B cell (primary cell): ENCODE measurements at regions of chr1 and their contacts with region 1.

Region 1: DNA sequence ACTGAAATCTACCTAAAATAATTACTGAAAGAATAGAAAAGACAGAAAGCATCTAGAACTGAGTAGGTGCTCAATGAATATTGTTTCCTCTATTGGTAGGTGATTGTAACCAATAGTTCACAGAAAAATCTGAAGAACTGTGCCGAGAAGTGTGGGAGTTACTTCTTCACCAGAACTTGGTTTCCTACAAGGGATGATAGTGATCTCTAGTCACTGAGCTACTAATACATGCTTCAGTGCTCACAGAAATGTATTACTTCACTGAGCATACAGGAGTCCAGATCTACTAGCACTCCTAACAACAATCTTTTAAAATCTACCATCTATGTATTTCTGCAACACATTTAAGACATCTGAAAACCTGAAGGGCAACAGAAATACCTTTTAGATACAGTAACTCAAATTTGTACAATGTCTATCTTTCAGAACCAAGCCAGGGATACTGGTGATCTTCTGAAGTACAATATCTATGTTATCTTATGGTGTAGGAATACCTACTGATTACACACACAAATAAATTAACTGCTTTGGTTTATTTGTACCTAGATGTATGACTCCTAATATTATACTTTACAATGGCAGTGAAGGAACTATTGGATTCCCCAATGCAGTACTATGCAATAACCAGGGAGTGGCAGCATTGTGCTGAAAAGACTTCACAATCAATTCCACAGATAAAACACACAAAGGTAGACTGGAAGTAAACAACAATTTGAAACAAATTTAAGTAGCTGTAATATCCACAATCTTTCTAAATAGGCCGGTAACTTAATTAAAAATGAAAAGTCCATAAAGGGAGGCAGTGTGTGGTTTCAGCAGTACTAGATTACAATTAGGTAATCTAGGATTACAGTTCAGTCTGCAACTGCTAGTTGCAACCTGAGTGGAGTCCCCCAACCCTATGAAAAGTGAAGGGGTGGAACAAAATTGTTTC is 243.0 kb downstream of the SLC45A1 start:
- DNase-seq: peak; percentile 73
- ATAC-seq: peak; percentile 88
- H3K4me3 ChIP-seq: no peak overlapping the region
- H3K4me3 Mint-ChIP-seq: no peak overlapping the region
- H3K27ac ChIP-seq: peak overlapping the region in 1 of 2 donors; percentile 52
- H3K27ac Mint-ChIP-seq: peak overlapping the region; percentile 53
- H3K4me1 ChIP-seq: peaks cover 25 to 37% of the 10 kb centered on the region in 2 donors
- H3K4me1 Mint-ChIP-seq: peaks cover 44% of the 10 kb centered on the region
- H3K27me3 ChIP-seq: no peaks in the 10 kb centered on the region
- H3K27me3 Mint-ChIP-seq: no peaks in the 10 kb centered on the region
- CTCF ChIP-seq: peak; percentile 98

Region 2: DNA sequence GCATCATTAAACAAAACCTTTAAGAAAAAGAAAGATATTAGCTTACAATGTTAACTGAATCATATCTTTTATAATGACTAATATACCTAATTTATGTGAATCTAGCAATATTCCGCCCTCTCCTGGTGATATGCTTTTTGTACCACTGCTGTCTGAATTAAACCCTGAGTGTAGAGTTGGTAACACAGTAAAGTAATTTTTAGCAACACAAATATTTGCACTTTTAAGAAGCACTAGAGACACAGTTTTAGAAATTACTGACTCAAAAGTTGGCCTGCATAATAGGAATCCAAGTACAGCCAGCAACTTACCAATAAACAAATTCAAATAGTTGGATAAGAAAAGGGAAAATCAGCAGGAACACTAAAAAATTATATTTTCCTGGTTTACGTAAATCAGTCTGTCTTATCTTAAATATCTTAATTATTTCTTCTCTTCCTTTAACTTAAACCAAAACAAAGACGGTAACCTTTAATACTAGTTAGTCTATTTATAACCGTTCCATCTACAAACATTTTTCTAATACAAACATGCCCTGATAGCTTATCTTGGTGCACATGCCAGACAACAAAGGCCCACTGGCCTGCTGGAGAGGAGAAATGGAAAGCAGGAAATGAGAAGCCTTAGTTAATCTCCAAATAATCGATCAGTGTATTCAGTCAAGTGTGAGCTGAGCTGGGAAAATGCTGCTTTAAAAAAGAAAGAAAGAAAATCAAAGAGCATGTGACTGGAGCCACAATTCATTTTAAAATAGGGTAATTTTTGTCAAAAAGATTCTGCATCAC is 10.5 kb after region 1 on chr1:
- CTCF ChIA-PET with region 1: interaction called, 24 read pairs
- POLR2A ChIA-PET with region 1: no interaction called
- intact Hi-C with region 1: no loop called
- DNase-seq: peak; percentile 20
- ATAC-seq: no peak
- H3K4me3 ChIP-seq: no peak overlapping the region
- H3K4me3 Mint-ChIP-seq: no peak overlapping the region
- H3K27ac ChIP-seq: no peak overlapping the region
- H3K27ac Mint-ChIP-seq: no peak overlapping the region
- H3K4me1 ChIP-seq: peaks cover 0 to 7% of the 10 kb centered on the region in 2 donors
- H3K4me1 Mint-ChIP-seq: peaks cover 13% of the 10 kb centered on the region
- H3K27me3 ChIP-seq: no peaks in the 10 kb centered on the region
- H3K27me3 Mint-ChIP-seq: no peaks in the 10 kb centered on the region
- CTCF ChIP-seq: peak; percentile 38

Region 3: DNA sequence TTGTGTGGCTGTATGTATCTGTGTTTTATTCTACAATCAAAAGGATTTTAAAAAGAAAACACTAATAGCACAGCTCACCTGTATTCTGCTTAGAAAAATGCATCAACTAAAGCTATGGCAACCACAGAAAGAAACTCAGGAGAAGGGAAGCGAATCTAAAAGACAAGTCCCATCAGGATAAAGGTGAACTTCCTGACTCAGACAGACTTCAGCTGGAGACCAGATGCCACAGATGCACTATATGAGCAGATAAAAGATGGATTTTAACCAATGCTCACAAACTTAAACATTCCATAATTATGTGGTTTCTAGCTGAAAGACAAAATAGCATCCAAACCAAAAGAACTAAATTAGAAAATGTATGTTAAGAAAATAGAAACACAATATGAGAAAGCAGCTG is 25.6 kb after region 1 on chr1:
- CTCF ChIA-PET with region 1: interaction called, 12 read pairs
- POLR2A ChIA-PET with region 1: no interaction called
- intact Hi-C with region 1: no loop called
- DNase-seq: no peak
- ATAC-seq: no peak
- H3K4me3 ChIP-seq: no peak overlapping the region
- H3K4me3 Mint-ChIP-seq: no peak overlapping the region
- H3K27ac ChIP-seq: no peak overlapping the region
- H3K27ac Mint-ChIP-seq: no peak overlapping the region
- H3K4me1 ChIP-seq: no peaks in the 10 kb centered on the region
- H3K4me1 Mint-ChIP-seq: peaks cover 27% of the 10 kb centered on the region
- H3K27me3 ChIP-seq: no peaks in the 10 kb centered on the region
- H3K27me3 Mint-ChIP-seq: no peaks in the 10 kb centered on the region
- CTCF ChIP-seq: no peak

Region 4: DNA sequence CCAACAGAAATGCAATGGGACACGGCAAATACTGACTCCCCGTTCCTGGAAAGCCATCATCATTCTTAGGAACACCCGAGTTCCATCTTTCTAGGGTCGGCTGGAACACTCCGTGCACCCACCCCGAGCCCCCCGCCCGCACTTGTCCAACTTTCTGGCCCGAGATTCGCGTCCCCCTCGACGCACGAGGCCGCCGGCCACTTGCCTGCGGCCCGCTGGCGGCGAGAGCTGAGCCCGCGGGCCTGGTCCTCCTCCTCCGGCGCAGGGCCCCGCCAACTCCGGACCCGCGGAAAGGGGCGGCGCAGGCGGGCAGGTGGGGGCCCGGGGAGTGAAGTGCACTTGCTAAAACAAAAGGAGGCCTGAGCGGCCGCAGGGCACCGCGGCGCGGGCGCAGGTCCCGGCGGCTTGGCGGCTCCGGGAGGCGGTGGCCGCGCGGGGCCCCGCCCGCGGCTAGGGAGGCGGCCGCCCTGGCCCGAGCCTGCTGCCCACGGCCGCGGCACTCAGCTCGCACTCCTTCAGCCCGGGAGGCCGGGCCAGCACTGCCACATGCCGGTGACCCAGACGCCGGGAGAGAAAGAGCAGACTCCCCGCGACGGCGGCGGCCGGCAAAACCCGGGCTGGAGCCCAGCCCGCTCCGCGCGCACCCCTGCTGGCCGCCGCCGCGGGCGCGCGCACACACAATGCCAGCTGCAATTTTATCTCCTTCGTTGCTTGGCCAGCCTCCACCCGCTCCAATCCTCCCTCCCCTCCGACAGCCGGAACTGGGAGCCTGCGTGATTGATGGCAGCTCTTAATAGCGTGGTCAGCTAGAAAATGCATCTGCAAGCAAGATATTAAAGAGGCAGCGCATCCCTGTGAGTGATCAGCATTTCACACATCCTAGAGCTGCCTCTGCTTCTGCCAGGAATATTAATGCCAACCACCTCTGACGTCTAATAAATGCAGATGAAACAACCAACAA is 142.3 kb after region 1 on chr1:
- CTCF ChIA-PET with region 1: interaction called, 40 read pairs
- POLR2A ChIA-PET with region 1: no interaction called
- intact Hi-C with region 1: no loop called
- DNase-seq: peak; percentile 88
- ATAC-seq: peak; percentile 72
- H3K4me3 ChIP-seq: peak overlapping the region; percentile 60 to 81 (median 63)
- H3K4me3 Mint-ChIP-seq: peak overlapping the region; percentile 93
- H3K27ac ChIP-seq: peak overlapping the region; percentile 54 to 77
- H3K27ac Mint-ChIP-seq: peak overlapping the region; percentile 93
- H3K4me1 ChIP-seq: peaks cover 32 to 39% of the 10 kb centered on the region in 2 donors
- H3K4me1 Mint-ChIP-seq: peaks cover 61% of the 10 kb centered on the region
- H3K27me3 ChIP-seq: no peaks in the 10 kb centered on the region
- H3K27me3 Mint-ChIP-seq: no peaks in the 10 kb centered on the region
- CTCF ChIP-seq: no peak

Region 5: GRCh38 chr1:8727809-8728213 is 166.9 kb after region 1 on chr1:
- CTCF ChIA-PET with region 1: interaction called, 328 read pairs
- POLR2A ChIA-PET with region 1: no interaction called
- intact Hi-C with region 1: loop called (anchors 1 kb)
- DNase-seq: no peak
- ATAC-seq: no peak
- H3K4me3 ChIP-seq: no peak overlapping the region
- H3K4me3 Mint-ChIP-seq: no peak overlapping the region
- H3K27ac ChIP-seq: no peak overlapping the region
- H3K27ac Mint-ChIP-seq: no peak overlapping the region
- H3K4me1 ChIP-seq: peaks cover 10 to 13% of the 10 kb centered on the region in 2 donors
- H3K4me1 Mint-ChIP-seq: peaks cover 24% of the 10 kb centered on the region
- H3K27me3 ChIP-seq: no peaks in the 10 kb centered on the region
- H3K27me3 Mint-ChIP-seq: no peaks in the 10 kb centered on the region
- CTCF ChIP-seq: no peak